Caco-2 (cell line): ENCODE measurements at regions of chr6 and their contacts with region 1.

Region 1: GRCh38 chr6:134822920-134823709 is 126.8 kb downstream of the ALDH8A1 start:
- DNase-seq: peak; percentile 49 to 73
- H3K4me3 ChIP-seq: no peak overlapping the region
- H3K4me3 Mint-ChIP-seq: no peak overlapping the region
- H3K27ac Mint-ChIP-seq: no peak overlapping the region
- H3K4me1 ChIP-seq: 0 out of 2 replicates have a peak, but pooled peaks cover 6% of the 10 kb centered on the region
- H3K4me1 Mint-ChIP-seq: peaks cover 23% of the 10 kb centered on the region
- H3K27me3 ChIP-seq: no peaks in the 10 kb centered on the region
- H3K27me3 Mint-ChIP-seq: no peaks in the 10 kb centered on the region
- CTCF ChIP-seq: peak; percentile 84 to 87

Region 2: DNA sequence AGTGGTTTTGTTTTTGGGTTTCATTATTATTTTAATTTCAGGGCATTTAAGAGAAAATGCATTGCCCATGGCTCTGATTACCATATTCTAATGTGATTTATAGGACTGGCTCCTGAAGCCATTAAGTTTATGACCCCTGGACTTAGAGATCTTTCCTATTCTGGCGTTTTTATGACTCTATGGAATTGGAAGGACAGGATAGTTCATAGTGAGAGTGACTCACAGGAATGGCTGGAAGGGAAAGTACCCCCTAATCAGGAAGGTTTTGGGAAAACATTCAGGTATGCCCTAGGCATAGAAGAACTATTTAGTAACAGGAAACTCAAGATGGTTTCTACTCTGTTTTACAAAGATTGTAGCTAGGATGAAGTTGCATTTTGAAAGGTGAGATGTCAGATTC is 662.1 kb before region 1 on chr6:
- CTCF ChIA-PET with region 1: no interaction called
- POLR2A ChIA-PET with region 1: no interaction called
- intact Hi-C with region 1: loop called (anchors 1 kb)
- DNase-seq: no peak
- H3K4me3 ChIP-seq: no peak overlapping the region
- H3K4me3 Mint-ChIP-seq: peak overlapping the region; percentile 39
- H3K27ac Mint-ChIP-seq: peak overlapping the region; percentile 90
- H3K4me1 ChIP-seq: peaks cover 18% of the 10 kb centered on the region
- H3K4me1 Mint-ChIP-seq: peaks cover 20% of the 10 kb centered on the region
- H3K27me3 ChIP-seq: no peaks in the 10 kb centered on the region
- H3K27me3 Mint-ChIP-seq: no peaks in the 10 kb centered on the region
- CTCF ChIP-seq: no peak

Region 3: DNA sequence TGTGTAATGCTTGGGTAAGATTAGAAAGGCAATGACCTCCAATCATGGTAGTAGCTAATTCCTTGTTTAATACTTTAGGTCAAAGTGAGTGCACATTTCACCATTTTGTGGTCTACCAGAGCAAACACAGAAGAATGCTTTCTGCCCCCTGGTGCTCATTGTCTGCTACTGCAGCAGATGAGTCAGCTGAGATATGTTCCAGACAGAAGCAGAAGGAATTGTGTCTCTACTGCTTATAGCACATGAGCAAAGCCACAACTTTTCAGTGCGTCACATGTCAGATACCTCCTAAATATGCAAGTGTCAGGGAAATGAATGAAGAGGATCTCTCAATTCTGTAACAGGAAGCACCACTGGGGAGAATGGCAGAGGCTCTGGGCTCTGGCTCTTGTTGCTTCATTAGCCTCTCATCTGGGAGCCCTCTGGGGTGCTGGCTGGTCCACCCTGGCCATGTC is 182.1 kb before region 1 on chr6:
- CTCF ChIA-PET with region 1: no interaction called
- POLR2A ChIA-PET with region 1: no interaction called
- intact Hi-C with region 1: loop called (anchors 1 kb)
- DNase-seq: peak; percentile 71 to 78
- H3K4me3 ChIP-seq: no peak overlapping the region
- H3K4me3 Mint-ChIP-seq: no peak overlapping the region
- H3K27ac Mint-ChIP-seq: peak overlapping the region; percentile 56
- H3K4me1 ChIP-seq: peaks cover 37% of the 10 kb centered on the region
- H3K4me1 Mint-ChIP-seq: peaks cover 34% of the 10 kb centered on the region
- H3K27me3 ChIP-seq: no peaks in the 10 kb centered on the region
- H3K27me3 Mint-ChIP-seq: no peaks in the 10 kb centered on the region
- CTCF ChIP-seq: peak; percentile 76 to 82

Region 4: GRCh38 chr6:134882426-134883038 is 59.4 kb after region 1 on chr6:
- CTCF ChIA-PET with region 1: interaction called, 5 read pairs
- POLR2A ChIA-PET with region 1: no interaction called
- intact Hi-C with region 1: loop called (anchors 1 kb)
- DNase-seq: peak; percentile 45 to 65
- H3K4me3 ChIP-seq: no peak overlapping the region
- H3K4me3 Mint-ChIP-seq: no peak overlapping the region
- H3K27ac Mint-ChIP-seq: no peak overlapping the region
- H3K4me1 ChIP-seq: no peaks in the 10 kb centered on the region; the same call in 1 of the 2 replicates
- H3K4me1 Mint-ChIP-seq: no peaks in the 10 kb centered on the region
- H3K27me3 ChIP-seq: no peaks in the 10 kb centered on the region
- H3K27me3 Mint-ChIP-seq: no peaks in the 10 kb centered on the region
- CTCF ChIP-seq: peak; percentile 87 to 91